ENCODE measurements at regions of chr7 and their contacts with region 1.

Region 1: GRCh38 chr7:128425850-128426249 is 16.1 kb upstream of the IMPDH1 start:
- DNase-seq: peak in 2 of 3 donors; percentile 82 to 93
- ATAC-seq: peak; percentile 89
- H3K4me3 ChIP-seq: no peak overlapping the region
- H3K4me1 ChIP-seq: no peaks in the 10 kb centered on the region
- CTCF ChIP-seq: peak; percentile 87

Region 2: GRCh38 chr7:128459394-128459878 is 33.6 kb after region 1 on chr7:
- intact Hi-C with region 1: loop called (anchors 1 to 2 kb)
- DNase-seq: peak in 2 of 3 donors; percentile 57 to 86
- ATAC-seq: peak; percentile 68
- H3K4me3 ChIP-seq: no peak overlapping the region
- H3K4me1 ChIP-seq: peaks cover 26% of the 10 kb centered on the region
- CTCF ChIP-seq: peak; percentile 49